Activated naive CD4-positive, alpha-beta T cell treated with anti-CD3 and anti-CD28 coated beads for 36 hours (primary cell): ENCODE measurements at regions of chr20 and their contacts with region 1.

Region 1: DNA sequence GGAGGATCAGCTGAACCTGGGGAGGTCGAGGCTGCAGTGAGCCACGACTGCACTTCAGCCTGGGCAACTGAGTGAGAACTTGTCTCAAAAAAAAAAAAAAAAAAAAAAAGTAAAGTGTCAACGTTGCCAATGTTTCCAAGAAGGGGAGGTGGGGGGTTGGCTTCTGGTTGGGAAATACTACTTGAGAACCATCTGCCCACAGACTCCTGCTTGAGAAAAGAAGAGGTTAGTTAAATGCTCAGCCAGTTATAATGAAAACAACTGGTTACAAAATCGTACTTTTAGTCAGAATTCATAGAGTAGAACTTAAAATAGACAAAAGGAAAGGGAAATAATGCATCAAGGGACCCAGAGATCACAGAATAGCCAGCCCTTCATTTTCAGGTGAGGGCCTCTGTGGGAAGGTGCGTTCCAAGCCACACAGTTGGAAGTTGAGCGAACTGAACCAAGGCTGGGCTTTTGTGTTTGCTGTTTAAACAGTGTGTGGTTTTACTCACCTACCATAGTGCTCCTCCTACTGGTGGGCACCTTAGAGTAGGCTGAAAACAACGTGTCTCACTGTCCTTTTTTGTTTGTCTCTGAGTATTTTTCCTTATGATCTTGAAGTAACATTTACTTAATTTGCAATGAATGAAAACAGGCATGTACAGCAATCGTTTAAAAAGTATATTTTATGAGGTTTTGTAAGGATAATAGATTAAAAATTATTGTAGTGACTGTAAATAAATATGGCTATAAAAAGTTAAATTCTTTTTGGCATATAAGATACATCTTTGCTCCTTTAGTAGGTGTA is 200.7 kb downstream of the BCAS1 start:
- DNase-seq: peak; percentile 85
- H3K4me3 Mint-ChIP-seq: peak overlapping the region; percentile 57
- H3K27ac Mint-ChIP-seq: peak overlapping the region; percentile 90
- H3K4me1 Mint-ChIP-seq: peaks cover 67% of the 10 kb centered on the region
- H3K27me3 Mint-ChIP-seq: no peaks in the 10 kb centered on the region

Region 2: DNA sequence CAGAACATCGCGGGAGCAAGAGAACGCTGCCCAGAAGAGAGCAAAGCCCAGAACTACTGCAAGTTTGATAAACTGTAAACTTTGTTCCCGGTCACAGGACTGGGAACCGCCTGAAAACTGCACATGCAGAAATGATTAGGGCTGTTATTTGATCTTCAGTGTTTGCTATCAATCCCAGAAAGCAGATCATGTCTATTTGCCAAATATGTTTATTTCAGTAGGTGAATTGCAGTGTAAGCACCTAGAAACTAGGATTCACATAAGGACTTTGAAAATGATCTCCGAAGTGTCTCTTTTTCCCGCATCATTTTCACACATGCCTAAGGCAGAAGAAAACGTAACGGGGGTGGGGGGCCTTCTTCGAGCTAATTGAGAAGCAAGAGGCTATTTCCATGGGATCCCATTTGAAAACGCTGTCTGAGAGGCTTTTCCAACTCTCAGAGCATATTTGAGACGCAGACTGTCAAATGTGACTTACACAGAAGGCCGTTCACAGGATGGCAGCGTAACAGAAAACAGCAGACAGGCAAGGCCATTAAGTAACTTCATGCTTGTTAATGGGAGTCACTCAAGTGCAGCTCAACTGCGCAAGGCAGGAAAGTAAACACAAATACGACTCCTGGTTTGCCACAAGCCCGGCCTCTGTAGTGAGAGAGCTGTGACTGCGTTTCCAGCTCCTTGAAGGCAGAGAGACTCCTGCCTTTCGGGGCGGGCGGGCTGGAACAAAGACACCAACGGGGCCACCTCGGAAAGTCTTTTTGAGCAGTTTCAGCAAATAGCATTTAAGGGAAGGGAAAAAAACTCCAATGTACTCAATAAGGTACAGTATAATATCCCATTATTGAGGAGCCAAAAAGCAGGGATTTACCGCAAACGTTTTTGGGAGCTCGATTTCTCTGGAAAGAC is 131.4 kb before region 1 on chr20:
- CTCF ChIA-PET with region 1: no interaction called
- intact Hi-C with region 1: loop called (anchors 5 kb)
- DNase-seq: no peak
- H3K4me3 Mint-ChIP-seq: no peak overlapping the region
- H3K27ac Mint-ChIP-seq: no peak overlapping the region
- H3K4me1 Mint-ChIP-seq: peaks cover 54% of the 10 kb centered on the region
- H3K27me3 Mint-ChIP-seq: no peaks in the 10 kb centered on the region

Region 3: DNA sequence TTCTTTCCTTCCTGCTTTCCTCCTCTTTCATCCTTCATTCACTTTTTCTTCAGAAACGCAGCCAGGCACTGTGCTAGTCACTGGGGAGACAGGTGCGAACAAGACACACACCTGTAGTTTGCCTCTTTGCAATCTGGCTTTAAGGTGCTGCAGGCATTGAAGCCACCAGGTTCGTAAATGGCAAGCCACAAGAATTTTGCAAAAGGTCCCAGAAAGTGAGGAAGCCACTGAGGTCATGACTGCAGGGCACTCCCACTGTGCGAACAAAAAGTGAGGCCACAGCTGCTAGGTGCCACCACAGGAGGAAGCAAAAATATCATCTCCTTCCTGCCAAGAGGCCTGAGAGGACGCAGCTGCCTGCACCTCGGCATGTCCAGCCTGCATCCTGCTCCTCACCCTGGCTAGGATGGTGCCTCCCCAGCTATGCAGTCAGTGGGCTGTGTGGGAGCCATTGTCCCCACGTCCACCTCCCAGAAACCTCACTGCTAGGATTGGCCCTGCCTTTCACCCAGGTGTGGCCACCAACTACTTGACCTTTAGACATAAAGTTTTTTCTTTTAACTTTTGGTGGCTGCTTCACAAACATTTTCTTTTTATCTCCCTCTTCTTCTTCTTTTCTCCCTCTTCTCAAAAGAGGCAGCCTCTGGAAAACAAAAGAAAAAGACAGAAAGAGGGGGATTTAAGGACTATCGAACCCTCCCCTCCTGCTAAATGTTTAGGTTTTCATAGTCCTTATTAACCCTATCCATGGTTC is 30.1 kb before region 1 on chr20:
- CTCF ChIA-PET with region 1: interaction called, 4 read pairs
- intact Hi-C with region 1: loop called (anchors 1 kb)
- DNase-seq: peak; percentile 65
- H3K4me3 Mint-ChIP-seq: peak overlapping the region; percentile 51
- H3K27ac Mint-ChIP-seq: peak overlapping the region; percentile 78
- H3K4me1 Mint-ChIP-seq: peaks cover 73% of the 10 kb centered on the region
- H3K27me3 Mint-ChIP-seq: no peaks in the 10 kb centered on the region

Region 4: GRCh38 chr20:53899351-53900167 is 29.9 kb after region 1 on chr20:
- CTCF ChIA-PET with region 1: interaction called, 9 read pairs
- intact Hi-C with region 1: loop called (anchors 1 kb)
- DNase-seq: peak; percentile 94
- H3K4me3 Mint-ChIP-seq: no peak overlapping the region
- H3K27ac Mint-ChIP-seq: peak overlapping the region; percentile 85
- H3K4me1 Mint-ChIP-seq: peaks cover 49% of the 10 kb centered on the region
- H3K27me3 Mint-ChIP-seq: no peaks in the 10 kb centered on the region